Activated naive CD4-positive, alpha-beta T cell treated with anti-CD3 and anti-CD28 coated beads, Interleukin-2, amount 10 ng/mL, durations not matched to agents 7 days and 5 days (primary cell): ENCODE measurements at regions of chr22 and their contacts with region 1.

Region 1: DNA sequence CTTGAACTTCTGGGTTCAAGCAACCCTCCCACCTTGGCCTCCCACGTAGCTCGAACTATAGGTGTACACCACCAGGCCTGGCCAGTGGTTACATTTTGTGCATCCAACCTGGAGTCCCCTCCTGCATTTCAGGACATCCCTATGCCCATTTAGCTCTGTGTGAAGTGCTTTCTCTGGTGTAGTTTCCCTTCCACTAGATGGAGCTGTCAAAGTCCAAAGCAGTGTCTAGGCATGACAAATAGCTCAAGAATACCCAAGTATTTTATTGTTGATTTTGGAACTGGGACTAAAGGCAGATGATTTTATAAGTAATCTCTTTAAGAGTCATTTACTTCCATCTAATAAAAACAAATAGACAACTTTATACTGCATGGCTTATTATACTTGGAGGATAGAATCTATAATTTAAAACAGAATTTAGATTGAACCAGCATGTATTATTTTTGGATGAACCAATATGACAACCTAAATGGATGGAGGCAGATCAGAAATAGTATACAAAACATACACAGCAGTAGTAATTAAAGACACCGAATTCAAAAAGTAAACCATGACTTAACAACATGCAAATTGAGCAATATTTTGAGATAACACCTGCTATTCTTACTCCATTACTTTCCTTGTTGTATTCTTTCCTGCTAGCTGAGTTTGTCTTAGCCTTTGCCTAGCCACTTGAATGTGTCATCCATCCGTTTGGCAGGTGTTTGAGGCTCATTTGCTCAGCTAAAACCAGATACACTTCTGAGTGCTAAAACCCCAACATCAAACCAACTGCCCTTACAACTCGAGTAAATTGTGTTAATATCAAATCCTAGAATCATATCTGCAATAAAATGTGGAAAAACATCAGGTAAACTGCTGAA is 37.7 kb downstream of the EIF4ENIF1 start:
- DNase-seq: no peak
- H3K4me3 Mint-ChIP-seq: no peak overlapping the region
- H3K27ac Mint-ChIP-seq: peak overlapping the region; percentile 16
- H3K4me1 Mint-ChIP-seq: no peaks in the 10 kb centered on the region
- H3K27me3 Mint-ChIP-seq: no peaks in the 10 kb centered on the region

Region 2: DNA sequence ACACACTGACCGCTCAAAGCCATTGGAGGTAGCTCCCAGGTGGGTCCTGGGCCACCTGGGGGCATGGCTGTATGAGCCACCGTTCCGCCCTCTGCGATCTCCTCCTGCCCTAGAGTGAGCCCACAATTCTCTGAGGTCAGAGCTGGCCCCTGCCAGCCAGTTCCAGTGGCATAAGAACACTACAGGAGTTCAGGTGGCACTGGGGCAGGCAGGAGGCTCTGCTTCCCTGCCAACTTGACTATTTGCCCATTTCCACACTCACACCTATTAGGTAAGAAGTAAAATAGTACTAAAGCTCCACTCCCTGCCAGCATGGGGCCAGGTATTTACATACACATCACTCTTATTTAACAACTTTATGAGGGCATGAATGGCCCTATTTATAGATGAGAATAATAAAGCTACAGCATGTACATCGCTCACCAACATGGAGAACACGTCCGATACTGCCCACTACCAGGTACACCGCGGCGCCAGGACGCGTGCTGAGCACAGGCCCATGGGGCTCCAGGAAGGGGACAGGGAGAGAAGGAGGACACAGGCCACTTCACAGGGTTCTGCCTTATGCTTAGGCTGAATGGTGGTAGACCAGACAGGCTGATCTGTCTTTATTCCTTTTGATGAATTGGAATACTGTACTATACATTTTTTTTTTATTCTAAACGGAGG is 183.8 kb after region 1 on chr22:
- CTCF ChIA-PET with region 1: interaction called, 20 read pairs
- DNase-seq: no peak
- H3K4me3 Mint-ChIP-seq: no peak overlapping the region
- H3K27ac Mint-ChIP-seq: no peak overlapping the region
- H3K4me1 Mint-ChIP-seq: peaks cover 41% of the 10 kb centered on the region
- H3K27me3 Mint-ChIP-seq: no peaks in the 10 kb centered on the region

Region 3: GRCh38 chr22:31707519-31707918 is 255.6 kb after region 1 on chr22:
- CTCF ChIA-PET with region 1: no interaction called
- DNase-seq: no peak
- H3K4me3 Mint-ChIP-seq: no peak overlapping the region
- H3K27ac Mint-ChIP-seq: no peak overlapping the region
- H3K4me1 Mint-ChIP-seq: no peaks in the 10 kb centered on the region
- H3K27me3 Mint-ChIP-seq: no peaks in the 10 kb centered on the region